CD8-positive, alpha-beta T cell (primary cell): ENCODE measurements at regions of chr2 and their contacts with region 1.

Region 1: DNA sequence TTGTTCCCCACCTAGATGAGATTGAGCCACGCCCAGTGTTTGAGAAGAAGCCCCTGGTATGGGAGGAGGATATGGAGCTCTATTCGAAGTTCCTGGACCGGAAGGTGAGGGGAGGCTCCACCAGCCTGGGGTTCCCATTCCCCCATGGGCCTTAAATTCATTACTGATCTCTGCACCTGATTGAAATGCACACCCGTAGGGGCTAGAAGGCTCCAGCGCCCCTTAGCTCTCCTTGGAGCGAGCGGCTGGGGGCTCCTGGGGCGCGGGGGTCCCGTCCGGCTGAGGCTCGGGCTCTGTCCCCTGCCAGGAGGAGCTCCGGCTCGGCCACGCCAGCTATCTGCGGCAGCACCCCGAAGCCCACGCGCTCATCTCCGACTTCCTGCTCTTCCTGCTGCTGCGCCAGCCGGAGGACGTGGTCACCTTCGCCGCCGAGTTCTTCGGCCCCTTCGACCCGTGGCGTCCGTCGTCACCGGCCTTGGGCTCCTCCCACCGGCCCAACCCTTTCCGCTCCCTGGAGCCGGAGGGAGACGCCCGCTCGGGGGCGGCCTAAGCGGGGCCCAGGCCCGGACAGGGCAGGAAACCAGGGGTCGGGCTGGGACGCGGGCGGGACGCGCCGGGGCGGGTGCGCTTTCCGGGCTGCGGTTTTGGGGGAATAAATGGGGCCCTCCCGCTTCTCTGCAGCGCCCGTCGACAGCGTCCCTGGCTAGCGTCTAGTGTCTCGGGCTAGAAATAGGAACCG is 10.9 kb downstream of the CATIP start:
- DNase-seq: peak; percentile 34 to 84 (median 71)
- ATAC-seq: peak; percentile 83
- H3K4me3 ChIP-seq: peak overlapping the region; percentile 50 to 57
- H3K4me3 Mint-ChIP-seq: peak overlapping the region; percentile 78
- H3K27ac ChIP-seq: peak overlapping the region; percentile 46 to 68
- H3K27ac Mint-ChIP-seq: peak overlapping the region; percentile 89
- H3K4me1 ChIP-seq: peaks cover 26% of the 10 kb centered on the region
- H3K4me1 Mint-ChIP-seq: peaks cover 26% of the 10 kb centered on the region
- H3K27me3 ChIP-seq: no peaks in the 10 kb centered on the region
- H3K27me3 Mint-ChIP-seq: no peaks in the 10 kb centered on the region
- CTCF ChIP-seq: no peak

Region 2: GRCh38 chr2:217666338-217666737 is 701.2 kb before region 1 on chr2:
- CTCF ChIA-PET with region 1: no interaction called
- POLR2A ChIA-PET with region 1: no interaction called
- intact Hi-C with region 1: no loop called
- DNase-seq: no peak
- ATAC-seq: no peak
- H3K4me3 ChIP-seq: no peak overlapping the region
- H3K4me3 Mint-ChIP-seq: no peak overlapping the region
- H3K27ac ChIP-seq: no peak overlapping the region
- H3K27ac Mint-ChIP-seq: no peak overlapping the region
- H3K4me1 ChIP-seq: no peaks in the 10 kb centered on the region
- H3K4me1 Mint-ChIP-seq: peaks cover 6% of the 10 kb centered on the region
- H3K27me3 ChIP-seq: no peaks in the 10 kb centered on the region
- H3K27me3 Mint-ChIP-seq: peaks cover 2% of the 10 kb centered on the region
- CTCF ChIP-seq: no peak

Region 3: GRCh38 chr2:218322895-218323808 is 44.4 kb before region 1 on chr2:
- CTCF ChIA-PET with region 1: no interaction called
- POLR2A ChIA-PET with region 1: no interaction called
- intact Hi-C with region 1: loop called in 1 of 2 experiments (anchors 5 kb)
- DNase-seq: peak; percentile 9 to 71 (median 45)
- ATAC-seq: peak; percentile 70
- H3K4me3 ChIP-seq: peak overlapping the region; percentile 39 to 48
- H3K4me3 Mint-ChIP-seq: peak overlapping the region; percentile 86
- H3K27ac ChIP-seq: peak overlapping the region in 1 of 2 experiments; percentile 48
- H3K27ac Mint-ChIP-seq: peak overlapping the region; percentile 77
- H3K4me1 ChIP-seq: peaks cover 47% of the 10 kb centered on the region
- H3K4me1 Mint-ChIP-seq: peaks cover 56% of the 10 kb centered on the region
- H3K27me3 ChIP-seq: peaks cover 0 to 3% of the 10 kb centered on the region in 2 experiments
- H3K27me3 Mint-ChIP-seq: peaks cover 4% of the 10 kb centered on the region
- CTCF ChIP-seq: no peak